Naive thymus-derived CD4-positive, alpha-beta T cell (primary cell): ENCODE measurements at regions of chr12 and their contacts with region 1.

Region 1: DNA sequence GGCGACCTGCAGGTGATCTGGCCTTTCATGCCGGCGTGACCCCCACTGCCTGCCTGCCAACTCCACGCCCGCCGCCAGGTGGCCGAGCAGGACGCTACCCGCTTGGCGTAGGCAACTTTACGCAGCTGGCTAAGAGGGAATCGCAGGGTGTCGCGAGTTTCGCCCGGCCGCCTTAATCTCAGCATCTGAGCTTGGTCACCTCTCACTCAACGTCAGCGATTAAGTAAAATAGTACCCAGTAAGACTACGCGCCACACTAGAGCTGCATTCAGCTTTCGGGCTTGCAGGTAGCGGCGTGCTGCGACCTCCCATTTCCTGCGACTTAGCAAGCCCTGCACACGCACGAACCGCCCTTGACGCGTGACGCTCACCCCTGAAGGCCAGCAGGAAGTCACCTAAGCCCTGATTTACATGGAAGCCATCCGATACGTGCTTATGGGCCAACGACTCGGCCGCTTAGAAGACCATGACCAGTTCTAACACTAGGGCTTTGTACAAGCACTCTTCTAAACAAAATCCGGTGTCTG is 33.2 kb downstream of the WBP11 start:
- DNase-seq: peak; percentile 79 to 89 (median 87)
- ATAC-seq: peak; percentile 66
- H3K4me3 ChIP-seq: peak overlapping the region; percentile 89
- H3K4me3 Mint-ChIP-seq: peak overlapping the region; percentile 91 to 100 (median 98)
- H3K27ac ChIP-seq: peak overlapping the region; percentile 96
- H3K27ac Mint-ChIP-seq: peak overlapping the region; percentile 98 to 100 (median 100)
- H3K4me1 ChIP-seq: peaks cover 11 to 28% of the 10 kb centered on the region in 2 donors
- H3K4me1 Mint-ChIP-seq: peaks cover 29 to 76% (median 57%) of the 10 kb centered on the region in 7 donors
- H3K27me3 ChIP-seq: no peaks in the 10 kb centered on the region
- H3K27me3 Mint-ChIP-seq: peaks cover 0 to 6% (median 0%) of the 10 kb centered on the region in 5 donors

Region 2: GRCh38 chr12:13100882-13101769 is 1668.9 kb before region 1 on chr12:
- CTCF ChIA-PET with region 1: no interaction called
- POLR2A ChIA-PET with region 1: no interaction called
- intact Hi-C with region 1: loop called in 1 of 2 experiments (anchors 2 kb)
- DNase-seq: peak; percentile 92 to 96 (median 94)
- ATAC-seq: peak; percentile 93
- H3K4me3 ChIP-seq: peak overlapping the region; percentile 68
- H3K4me3 Mint-ChIP-seq: peak overlapping the region; percentile 82 to 87 (median 84)
- H3K27ac ChIP-seq: peak overlapping the region; percentile 92
- H3K27ac Mint-ChIP-seq: peak overlapping the region; percentile 85 to 99 (median 95)
- H3K4me1 ChIP-seq: peaks cover 6 to 32% of the 10 kb centered on the region in 2 donors
- H3K4me1 Mint-ChIP-seq: peaks cover 24 to 49% (median 43%) of the 10 kb centered on the region in 7 donors
- H3K27me3 ChIP-seq: no peaks in the 10 kb centered on the region
- H3K27me3 Mint-ChIP-seq: peaks cover 0 to 5% (median 0%) of the 10 kb centered on the region in 5 donors

Region 3: DNA sequence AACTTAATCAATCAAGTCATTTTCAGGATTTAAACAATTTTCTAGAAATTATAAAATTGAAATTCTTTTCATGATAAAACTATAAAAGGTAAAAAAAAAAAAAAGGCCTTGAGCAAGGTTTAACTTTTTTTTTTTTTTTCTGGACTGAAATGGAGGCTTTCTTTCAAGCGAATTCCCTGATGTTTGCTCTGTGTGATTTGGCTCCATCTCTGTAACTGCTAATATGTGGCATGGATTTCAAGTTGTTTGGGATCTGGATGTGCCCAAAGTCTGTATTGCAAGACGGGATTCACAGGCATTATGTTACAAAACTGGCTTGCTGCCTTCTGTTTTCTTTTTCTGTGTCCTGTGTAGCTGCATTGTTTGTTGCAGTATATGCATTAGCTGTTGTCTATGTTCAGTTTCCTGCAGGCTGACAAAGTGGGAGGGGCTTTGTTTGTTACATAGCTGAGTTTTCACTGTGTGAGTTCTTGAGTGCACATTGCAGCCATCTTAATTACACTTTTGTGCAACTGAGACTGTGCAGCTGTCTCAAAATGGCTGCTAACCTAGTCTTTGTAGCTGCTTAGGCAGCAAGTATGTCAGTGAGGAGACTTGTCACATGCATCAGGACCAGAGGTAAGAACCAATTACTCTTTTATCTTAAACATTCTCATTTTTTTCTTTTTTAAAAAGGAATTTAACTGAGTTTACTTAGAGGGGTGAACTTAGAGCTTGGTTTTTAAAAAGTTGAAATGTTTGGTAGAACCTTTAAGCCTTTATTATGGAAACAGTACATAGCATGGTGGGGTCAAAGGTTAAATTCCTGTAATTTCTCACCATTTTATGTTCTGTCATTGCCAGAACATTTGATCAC is 385.0 kb before region 1 on chr12:
- CTCF ChIA-PET with region 1: interaction called, 4 read pairs
- POLR2A ChIA-PET with region 1: interaction called, 31 read pairs
- intact Hi-C with region 1: loop called in 1 of 2 experiments (anchors 5 kb)
- DNase-seq: peak in 8 of 9 donors; percentile 47 to 84 (median 77)
- ATAC-seq: peak; percentile 96
- H3K4me3 ChIP-seq: peak overlapping the region; percentile 18
- H3K4me3 Mint-ChIP-seq: peak overlapping the region; percentile 65 to 85 (median 76)
- H3K27ac ChIP-seq: peak overlapping the region; percentile 71
- H3K27ac Mint-ChIP-seq: peak overlapping the region; percentile 86 to 95 (median 93)
- H3K4me1 ChIP-seq: peaks cover 32 to 49% of the 10 kb centered on the region in 2 donors
- H3K4me1 Mint-ChIP-seq: peaks cover 31 to 79% (median 68%) of the 10 kb centered on the region in 7 donors
- H3K27me3 ChIP-seq: no peaks in the 10 kb centered on the region
- H3K27me3 Mint-ChIP-seq: no peaks in the 10 kb centered on the region

Region 4: GRCh38 chr12:14756334-14757143 is 13.5 kb before region 1 on chr12:
- CTCF ChIA-PET with region 1: interaction called, 5 read pairs
- POLR2A ChIA-PET with region 1: interaction called, 6 read pairs
- intact Hi-C with region 1: loop called in 1 of 2 experiments (anchors 1 kb)
- DNase-seq: no peak
- ATAC-seq: no peak
- H3K4me3 ChIP-seq: no peak overlapping the region
- H3K4me3 Mint-ChIP-seq: no peak overlapping the region
- H3K27ac ChIP-seq: no peak overlapping the region
- H3K27ac Mint-ChIP-seq: peak overlapping the region in 1 of 9 donors; percentile 4
- H3K4me1 ChIP-seq: no peaks in the 10 kb centered on the region
- H3K4me1 Mint-ChIP-seq: peaks cover 6 to 44% (median 20%) of the 10 kb centered on the region in 7 donors
- H3K27me3 ChIP-seq: no peaks in the 10 kb centered on the region
- H3K27me3 Mint-ChIP-seq: peaks cover 0 to 3% (median 0%) of the 10 kb centered on the region in 5 donors

Region 5: DNA sequence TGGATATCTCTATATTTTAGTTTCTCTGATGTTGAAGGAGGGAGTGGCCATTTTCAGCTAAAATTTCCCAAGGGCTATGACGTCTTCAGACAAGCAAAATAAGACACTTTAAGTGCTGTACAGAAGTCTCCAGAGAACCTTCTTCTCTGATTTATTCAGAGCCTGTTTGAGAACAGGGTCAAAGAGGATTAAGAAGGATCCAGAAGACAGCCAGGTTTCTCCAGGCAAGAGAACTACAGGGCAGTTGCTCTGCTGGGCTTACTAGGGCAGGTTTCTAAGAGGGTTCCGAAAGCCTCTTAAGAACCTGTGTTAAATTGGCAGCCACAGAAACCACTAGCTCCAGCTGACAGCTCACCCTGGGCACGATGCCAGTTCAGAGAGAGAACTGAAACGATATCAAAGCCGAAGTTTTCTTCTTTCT is 114.4 kb after region 1 on chr12:
- CTCF ChIA-PET with region 1: no interaction called
- POLR2A ChIA-PET with region 1: interaction called, 12 read pairs
- intact Hi-C with region 1: loop called in 1 of 2 experiments (anchors 1 kb)
- DNase-seq: peak in 8 of 9 donors; percentile 59 to 93 (median 88)
- ATAC-seq: peak; percentile 95
- H3K4me3 ChIP-seq: no peak overlapping the region
- H3K4me3 Mint-ChIP-seq: peak overlapping the region in 9 of 10 donors; percentile 62 to 83 (median 77)
- H3K27ac ChIP-seq: peak overlapping the region; percentile 60
- H3K27ac Mint-ChIP-seq: peak overlapping the region in 8 of 9 donors; percentile 49 to 95 (median 92)
- H3K4me1 ChIP-seq: peaks cover 0 to 27% of the 10 kb centered on the region in 2 donors
- H3K4me1 Mint-ChIP-seq: peaks cover 15 to 75% (median 60%) of the 10 kb centered on the region in 7 donors
- H3K27me3 ChIP-seq: no peaks in the 10 kb centered on the region
- H3K27me3 Mint-ChIP-seq: peaks cover 0 to 29% (median 8%) of the 10 kb centered on the region in 5 donors

Region 6: GRCh38 chr12:15001733-15002382 is 231.8 kb after region 1 on chr12:
- CTCF ChIA-PET with region 1: no interaction called
- POLR2A ChIA-PET with region 1: no interaction called
- intact Hi-C with region 1: no loop called
- DNase-seq: no peak
- ATAC-seq: no peak
- H3K4me3 ChIP-seq: no peak overlapping the region
- H3K4me3 Mint-ChIP-seq: no peak overlapping the region
- H3K27ac ChIP-seq: no peak overlapping the region
- H3K27ac Mint-ChIP-seq: no peak overlapping the region
- H3K4me1 ChIP-seq: no peaks in the 10 kb centered on the region
- H3K4me1 Mint-ChIP-seq: no peaks in the 10 kb centered on the region
- H3K27me3 ChIP-seq: peaks cover 0 to 4% of the 10 kb centered on the region in 2 donors
- H3K27me3 Mint-ChIP-seq: peaks cover 9 to 82% (median 26%) of the 10 kb centered on the region in 5 donors

Region 7: GRCh38 chr12:15220994-15221885 is 451.2 kb after region 1 on chr12 and contains the start of gene RERG:
- CTCF ChIA-PET with region 1: no interaction called
- POLR2A ChIA-PET with region 1: interaction called, 3 read pairs
- intact Hi-C with region 1: loop called in 1 of 2 experiments (anchors 2 kb)
- DNase-seq: peak; percentile 57 to 86 (median 77)
- ATAC-seq: peak; percentile 99
- H3K4me3 ChIP-seq: peak within 1 kb of the TSS; percentile 43
- H3K4me3 Mint-ChIP-seq: peak within 1 kb of the TSS; percentile 61 to 83 (median 78)
- H3K27ac ChIP-seq: no peak within 1 kb of the TSS
- H3K27ac Mint-ChIP-seq: no peak within 1 kb of the TSS
- H3K4me1 ChIP-seq: peaks cover 6% of the 10 kb centered on the region in 2 donors
- H3K4me1 Mint-ChIP-seq: peaks cover 0 to 17% (median 9%) of the 10 kb centered on the region in 7 donors
- H3K27me3 ChIP-seq: no peaks in the 10 kb centered on the region
- H3K27me3 Mint-ChIP-seq: peaks cover 25 to 43% (median 32%) of the 10 kb centered on the region in 5 donors
- total RNA-seq, gene RERG: 0.35 TPM in 1 of 5 experiments, not detected in the others

Region 8: GRCh38 chr12:15882118-15882971 is 1112.3 kb after region 1 on chr12 and contains the start of gene STRAP:
- CTCF ChIA-PET with region 1: no interaction called
- POLR2A ChIA-PET with region 1: interaction called, 5 read pairs
- intact Hi-C with region 1: loop called (anchors 1 to 5 kb)
- DNase-seq: peak; percentile 94 to 98 (median 97)
- ATAC-seq: peak; percentile 97
- H3K4me3 ChIP-seq: peak within 1 kb of the TSS; percentile 97
- H3K4me3 Mint-ChIP-seq: peak within 1 kb of the TSS; percentile 91 to 100 (median 97)
- H3K27ac ChIP-seq: peak within 1 kb of the TSS; percentile 96
- H3K27ac Mint-ChIP-seq: peak within 1 kb of the TSS; percentile 98 to 100 (median 99)
- H3K4me1 ChIP-seq: peaks cover 22 to 32% of the 10 kb centered on the region in 2 donors
- H3K4me1 Mint-ChIP-seq: peaks cover 35 to 66% (median 60%) of the 10 kb centered on the region in 7 donors
- H3K27me3 ChIP-seq: no peaks in the 10 kb centered on the region
- H3K27me3 Mint-ChIP-seq: no peaks in the 10 kb centered on the region
- total RNA-seq, gene STRAP: 42.2 to 97.2 (median 70.9) TPM